ENCODE measurements at regions of chr16 and their contacts with region 1.

Region 1: GRCh38 chr16:28935924-28936783 is 4.4 kb downstream of the CD19 start:
- DNase-seq: peak; percentile 85
- H3K4me3 Mint-ChIP-seq: peak overlapping the region; percentile 62
- H3K27ac Mint-ChIP-seq: peak overlapping the region; percentile 27
- H3K4me1 Mint-ChIP-seq: peaks cover 11% of the 10 kb centered on the region
- H3K27me3 Mint-ChIP-seq: peaks cover 2% of the 10 kb centered on the region

Region 2: DNA sequence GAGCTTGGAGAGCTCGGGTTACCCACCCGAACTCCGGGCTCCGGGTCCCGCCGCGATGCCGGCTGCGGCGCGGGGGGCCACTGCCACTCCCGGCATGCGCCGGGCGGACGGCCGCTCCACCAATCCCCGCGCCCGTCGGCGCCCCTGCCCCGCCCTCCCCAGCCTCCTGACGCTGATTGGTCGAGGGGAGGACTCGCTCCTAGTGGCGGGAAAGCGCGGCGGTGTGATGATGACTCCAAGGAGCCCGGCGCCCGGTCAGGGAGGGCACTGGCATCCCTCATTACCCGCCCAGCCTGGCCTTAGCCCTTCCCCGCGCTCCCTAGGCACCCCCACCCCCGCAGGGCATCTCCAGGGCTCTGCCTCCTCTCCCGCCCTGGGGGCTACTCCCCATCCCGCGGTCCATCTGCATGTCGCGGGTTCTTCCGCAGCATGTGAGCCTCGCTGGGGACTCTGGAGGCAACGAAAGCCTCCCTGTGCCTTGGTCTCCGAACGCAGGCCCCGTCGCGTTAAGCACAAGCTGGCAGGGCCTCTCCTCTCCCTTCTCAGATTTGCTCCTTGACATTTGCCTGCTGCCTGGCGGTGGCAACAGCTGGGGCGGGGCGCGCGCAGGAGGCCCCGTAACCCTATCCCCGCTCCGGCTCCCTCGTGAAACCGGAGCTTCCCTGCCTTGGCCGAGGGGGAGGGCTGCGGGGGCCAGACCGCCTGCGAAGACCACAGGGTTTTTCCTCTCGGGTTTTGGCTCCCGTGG is 56.1 kb before region 1 on chr16:
- intact Hi-C with region 1: loop called (anchors 1 kb)
- DNase-seq: peak; percentile 80
- H3K4me3 Mint-ChIP-seq: peak overlapping the region; percentile 91
- H3K27ac Mint-ChIP-seq: peak overlapping the region; percentile 70
- H3K4me1 Mint-ChIP-seq: peaks cover 18% of the 10 kb centered on the region
- H3K27me3 Mint-ChIP-seq: peaks cover 2% of the 10 kb centered on the region

Measured in activated T-helper 1 cell treated with anti-CD3 and anti-CD28 coated beads, Interleukin-12 subunit alpha, Interleukin-12 subunit beta, Interleukin-2, Interleukin-4 antibody, amounts not matched to agents 30 ng/mL and 10 ng/mL and 1 ng/mL, durations not matched to agents 14 hours and 24 hours and 36 hours (primary cell).